ENCODE measurements at regions of chr1 and their contacts with region 1.

Region 1: GRCh38 chr1:64975740-64976139 is 9.4 kb upstream of the JAK1 start:
- DNase-seq: no peak
- ATAC-seq: peak; percentile 68
- H3K4me3 ChIP-seq: no peak overlapping the region
- H3K27ac ChIP-seq: no peak overlapping the region
- H3K4me1 ChIP-seq: peaks cover 19% of the 10 kb centered on the region
- H3K27me3 ChIP-seq: no peaks in the 10 kb centered on the region
- CTCF ChIP-seq: no peak
- EP300 ChIP-seq: no peak
- POLR2A ChIP-seq: no peak
- RAD21 ChIP-seq: no peak

Region 2: GRCh38 chr1:65002508-65003315 is 27.0 kb after region 1 on chr1:
- CTCF ChIA-PET with region 1: no interaction called
- POLR2A ChIA-PET with region 1: no interaction called
- in situ Hi-C with region 1: no loop called
- intact Hi-C with region 1: loop called (anchors 2 kb)
- DNase-seq: no peak
- ATAC-seq: peak; percentile 97
- H3K4me3 ChIP-seq: peak overlapping the region; percentile 59 to 74 (median 61)
- H3K27ac ChIP-seq: no peak overlapping the region
- H3K4me1 ChIP-seq: peaks cover 20% of the 10 kb centered on the region
- H3K27me3 ChIP-seq: peaks cover 3 to 26% of the 10 kb centered on the region in 2 experiments
- CTCF ChIP-seq: no peak
- EP300 ChIP-seq: peak in 1 of 2 experiments; percentile 28; a peak in 1 of 4 replicates
- POLR2A ChIP-seq: no peak
- RAD21 ChIP-seq: no peak

Region 3: DNA sequence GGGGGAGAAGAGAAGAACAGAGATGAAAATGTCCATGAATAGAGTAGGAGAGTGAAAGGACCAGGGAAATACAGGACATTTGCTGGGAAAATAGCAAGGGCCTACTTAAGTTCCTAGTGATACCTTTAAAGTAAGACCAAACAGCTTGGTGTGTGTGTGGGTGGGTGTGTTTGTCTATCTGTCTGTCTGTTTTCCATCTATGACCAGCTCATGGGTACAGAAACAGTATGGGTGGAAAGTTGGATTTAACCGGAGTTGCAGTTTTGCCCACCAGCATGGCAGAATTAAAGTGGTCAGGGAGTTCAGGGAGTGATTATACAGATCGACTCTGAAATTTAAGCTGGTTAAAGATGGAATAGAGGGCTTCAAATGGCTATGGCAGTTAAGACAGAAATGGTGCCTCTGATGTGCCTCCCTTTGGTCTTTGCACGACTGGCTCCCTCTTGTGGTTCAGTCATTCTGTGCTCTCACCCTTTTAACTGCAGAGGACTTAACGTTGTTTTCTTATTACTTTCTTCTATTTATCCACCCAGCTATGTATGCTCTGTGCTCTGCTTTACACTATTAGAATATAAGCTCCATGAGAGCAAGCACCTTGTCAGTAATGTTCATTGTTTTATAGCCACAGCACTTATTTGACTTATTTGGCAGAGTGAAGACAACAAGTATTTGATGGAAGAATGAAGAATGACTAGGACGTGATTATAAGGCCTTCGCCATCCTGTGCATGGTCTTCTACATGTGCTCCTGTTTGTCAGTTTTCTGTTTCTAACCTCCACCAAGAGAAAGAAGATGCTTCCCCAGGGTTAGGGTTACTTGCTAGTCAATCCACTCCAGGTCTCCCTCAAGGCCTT is 99.6 kb after region 1 on chr1:
- CTCF ChIA-PET with region 1: no interaction called
- POLR2A ChIA-PET with region 1: no interaction called
- in situ Hi-C with region 1: no loop called
- intact Hi-C with region 1: no loop called
- DNase-seq: peak; percentile 57
- ATAC-seq: peak; percentile 92
- H3K4me3 ChIP-seq: no peak overlapping the region
- H3K27ac ChIP-seq: no peak overlapping the region
- H3K4me1 ChIP-seq: no peaks in the 10 kb centered on the region; the same call in 1 of the 2 replicates
- H3K27me3 ChIP-seq: 0 out of 5 replicates have a peak, but pooled peaks cover 0 to 6% of the 10 kb centered on the region in 2 experiments
- CTCF ChIP-seq: peak; percentile 81
- EP300 ChIP-seq: no peak
- POLR2A ChIP-seq: no peak
- RAD21 ChIP-seq: no peak